ENCODE measurements at regions of chr13 and their contacts with region 1.

Region 1: DNA sequence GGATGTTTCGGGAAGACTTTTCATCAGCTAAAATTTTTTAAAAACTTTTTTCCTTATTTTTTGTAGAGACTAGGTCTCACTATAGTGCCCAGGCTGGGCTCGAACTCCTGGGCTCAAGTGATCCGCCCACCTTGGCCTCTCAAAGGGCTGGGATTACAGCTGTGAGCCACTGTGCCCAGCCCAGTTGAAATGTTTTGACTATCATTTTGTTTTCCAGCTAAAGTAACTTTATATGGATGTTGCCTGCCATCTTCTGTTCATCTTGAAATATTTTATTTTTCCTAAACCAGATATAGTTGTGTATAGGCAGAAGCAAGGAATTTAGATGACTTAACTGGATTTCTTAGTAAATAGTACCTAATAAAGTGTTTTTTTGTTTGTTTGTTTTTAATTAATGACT is 7.0 kb downstream of the CAB39L start:
- DNase-seq: peak; percentile 52 to 71 (median 66)
- H3K4me3 ChIP-seq: no peak overlapping the region
- H3K27ac ChIP-seq: no peak overlapping the region
- H3K4me1 ChIP-seq: peaks cover 0 to 2% (median 0%) of the 10 kb centered on the region in 4 experiments
- H3K27me3 ChIP-seq: no peaks in the 10 kb centered on the region

Region 2: GRCh38 chr13:49240017-49240416 is 196.9 kb before region 1 on chr13:
- CTCF ChIA-PET with region 1: interaction called, 10 read pairs
- POLR2A ChIA-PET with region 1: no interaction called
- DNase-seq: peak; percentile 50 to 64 (median 60)
- H3K4me3 ChIP-seq: no peak overlapping the region
- H3K27ac ChIP-seq: no peak overlapping the region
- H3K4me1 ChIP-seq: no peaks in the 10 kb centered on the region
- H3K27me3 ChIP-seq: no peaks in the 10 kb centered on the region

Region 3: DNA sequence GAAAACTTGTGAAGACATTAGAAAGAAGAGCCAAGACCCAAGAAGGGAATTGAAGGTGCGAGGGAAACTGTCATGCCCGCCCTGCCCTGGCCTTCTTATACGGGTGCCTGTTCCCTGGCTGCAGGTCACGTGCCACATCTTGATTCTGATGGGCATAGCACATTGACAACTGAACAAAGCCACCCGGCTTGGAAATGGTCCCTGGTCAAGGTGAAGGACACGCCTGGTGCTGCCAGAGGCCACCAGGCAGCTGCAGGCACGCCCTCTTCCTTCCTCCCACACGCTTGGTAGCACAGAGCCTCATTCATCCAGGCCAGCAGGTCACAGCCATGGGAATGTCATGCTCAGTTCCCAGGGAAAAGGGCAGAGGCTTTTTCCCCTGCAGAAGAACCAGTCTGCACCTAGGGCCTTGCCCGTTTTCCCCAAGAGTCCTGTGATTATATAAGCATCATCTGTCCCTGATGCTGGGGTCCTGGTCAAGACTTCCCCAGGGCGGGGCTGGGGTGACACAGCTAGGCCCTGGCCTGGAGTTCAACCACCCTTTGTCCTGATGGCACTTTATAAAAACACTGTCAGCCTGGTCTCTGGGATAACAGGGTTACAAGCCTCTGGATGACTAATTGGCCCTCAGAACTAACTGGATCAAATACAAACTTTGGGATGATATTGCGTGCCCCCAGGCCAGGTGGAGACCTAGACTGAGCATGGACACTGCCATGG is 133.2 kb before region 1 on chr13:
- CTCF ChIA-PET with region 1: interaction called, 11 read pairs
- POLR2A ChIA-PET with region 1: no interaction called
- DNase-seq: no peak
- H3K4me3 ChIP-seq: no peak overlapping the region
- H3K27ac ChIP-seq: no peak overlapping the region
- H3K4me1 ChIP-seq: peaks cover 0 to 11% (median 5%) of the 10 kb centered on the region in 4 experiments
- H3K27me3 ChIP-seq: no peaks in the 10 kb centered on the region

Region 4: GRCh38 chr13:49450105-49450819 is 13.4 kb after region 1 on chr13:
- CTCF ChIA-PET with region 1: no interaction called
- POLR2A ChIA-PET with region 1: no interaction called
- DNase-seq: peak in 2 of 3 donors; percentile 77 to 85
- H3K4me3 ChIP-seq: no peak overlapping the region
- H3K27ac ChIP-seq: no peak overlapping the region
- H3K4me1 ChIP-seq: peaks cover 5 to 38% (median 24%) of the 10 kb centered on the region in 4 experiments
- H3K27me3 ChIP-seq: no peaks in the 10 kb centered on the region